ENCODE measurements at regions of chr10 and their contacts with region 1.

Region 1: GRCh38 chr10:62302760-62303159 is 34.1 kb upstream of the RTKN2 start:
- DNase-seq: no peak
- ATAC-seq: no peak
- H3K4me3 ChIP-seq: no peak overlapping the region
- H3K27ac ChIP-seq: no peak overlapping the region
- H3K4me1 ChIP-seq: no peaks in the 10 kb centered on the region
- H3K27me3 ChIP-seq: 0 out of 4 replicates have a peak, but pooled peaks cover 0 to 2% of the 10 kb centered on the region in 2 experiments
- CTCF ChIP-seq: no peak
- EP300 ChIP-seq: no peak
- POLR2A ChIP-seq: no peak
- RAD21 ChIP-seq: no peak

Region 2: DNA sequence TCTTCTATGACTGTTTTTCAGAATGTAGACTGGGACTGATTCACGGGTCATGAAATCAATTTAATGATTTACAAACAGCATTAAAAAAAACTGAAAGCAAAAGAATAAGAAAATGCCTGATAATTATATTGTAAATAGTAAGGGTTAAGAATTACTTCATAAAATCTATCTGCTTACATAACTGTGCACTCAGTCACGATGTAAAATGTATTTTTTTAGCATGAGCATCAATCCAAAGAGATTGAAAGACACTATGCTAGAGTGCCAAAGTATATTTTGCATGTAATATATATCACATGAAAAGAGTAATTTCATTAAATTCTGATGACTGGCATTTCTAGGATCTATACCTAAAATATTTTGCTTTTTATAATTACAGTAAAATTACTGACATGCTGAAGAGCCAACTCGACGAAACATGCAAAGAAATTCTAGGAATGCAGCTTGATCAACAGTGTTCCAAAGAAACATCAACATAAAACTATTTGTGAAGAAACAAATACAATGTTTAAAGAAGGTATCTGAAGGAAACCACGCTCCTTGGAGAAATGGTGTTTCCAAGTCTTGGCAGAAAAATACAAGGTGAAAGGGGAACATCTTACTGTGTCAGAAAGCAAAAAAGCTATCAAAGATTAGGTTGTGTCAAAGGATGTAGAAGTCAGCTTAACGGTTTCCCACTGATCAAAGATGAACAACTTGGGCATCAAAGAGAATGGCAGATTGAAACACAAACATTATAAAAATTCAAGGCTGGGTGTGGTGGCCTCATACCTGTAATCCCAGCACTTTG is 69.1 kb before region 1 on chr10:
- CTCF ChIA-PET with region 1: no interaction called
- POLR2A ChIA-PET with region 1: no interaction called
- RAD21 ChIA-PET with region 1: no interaction called
- SMC1A ChIA-PET with region 1: no interaction called
- in situ Hi-C with region 1: no loop called
- intact Hi-C with region 1: no loop called
- DNase-seq: no peak
- ATAC-seq: no peak
- H3K4me3 ChIP-seq: no peak overlapping the region
- H3K27ac ChIP-seq: no peak overlapping the region
- H3K4me1 ChIP-seq: no peaks in the 10 kb centered on the region
- H3K27me3 ChIP-seq: no peaks in the 10 kb centered on the region
- CTCF ChIP-seq: no peak
- EP300 ChIP-seq: no peak
- POLR2A ChIP-seq: no peak
- RAD21 ChIP-seq: no peak

Region 3: DNA sequence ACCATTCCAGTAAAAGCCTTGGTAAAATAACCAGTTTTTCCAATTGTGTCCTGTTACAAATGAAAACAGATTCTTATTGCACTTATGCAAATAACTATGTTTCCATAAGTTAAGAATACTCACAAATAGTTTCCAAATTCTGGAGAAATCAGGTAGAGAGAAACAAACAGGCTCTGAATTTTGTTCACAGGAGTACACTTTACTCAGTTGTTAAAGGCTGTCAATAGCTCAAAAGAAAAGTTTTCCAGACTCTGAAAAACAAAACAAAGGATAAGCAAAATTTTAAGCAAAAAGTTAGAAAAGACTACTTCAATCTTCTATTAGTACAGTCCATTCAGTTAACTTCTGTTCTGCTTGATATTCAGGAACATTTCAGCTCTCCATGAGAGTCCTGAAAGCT is 38.7 kb after region 1 on chr10:
- CTCF ChIA-PET with region 1: no interaction called
- POLR2A ChIA-PET with region 1: no interaction called
- RAD21 ChIA-PET with region 1: no interaction called
- SMC1A ChIA-PET with region 1: no interaction called
- in situ Hi-C with region 1: no loop called
- intact Hi-C with region 1: loop called (anchors 5 kb)
- DNase-seq: no peak
- ATAC-seq: no peak
- H3K4me3 ChIP-seq: no peak overlapping the region
- H3K27ac ChIP-seq: no peak overlapping the region
- H3K4me1 ChIP-seq: no peaks in the 10 kb centered on the region
- H3K27me3 ChIP-seq: no peaks in the 10 kb centered on the region
- CTCF ChIP-seq: no peak
- EP300 ChIP-seq: no peak
- POLR2A ChIP-seq: no peak
- RAD21 ChIP-seq: no peak

Region 4: DNA sequence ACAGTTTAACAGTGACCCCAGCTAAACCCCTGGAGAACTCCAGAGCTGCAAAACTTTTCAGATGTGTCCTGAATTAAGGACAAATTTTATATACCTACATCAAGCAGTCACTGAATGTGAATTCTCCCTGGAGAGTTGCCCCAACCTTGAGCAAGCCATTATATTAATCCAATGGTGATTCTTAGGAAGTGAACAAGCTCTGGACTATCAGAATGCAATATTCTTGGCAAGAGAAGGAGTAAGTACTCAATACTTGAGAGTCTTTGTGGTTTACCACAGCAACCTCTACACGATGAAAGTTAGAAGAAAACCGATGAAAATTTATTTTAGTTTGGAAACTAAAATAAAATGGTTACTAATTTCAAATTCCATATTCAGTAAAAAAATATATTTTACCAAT is 52.2 kb after region 1 on chr10:
- CTCF ChIA-PET with region 1: no interaction called
- POLR2A ChIA-PET with region 1: no interaction called
- RAD21 ChIA-PET with region 1: no interaction called
- SMC1A ChIA-PET with region 1: no interaction called
- in situ Hi-C with region 1: no loop called
- intact Hi-C with region 1: no loop called
- DNase-seq: no peak
- ATAC-seq: no peak
- H3K4me3 ChIP-seq: no peak overlapping the region
- H3K27ac ChIP-seq: no peak overlapping the region
- H3K4me1 ChIP-seq: no peaks in the 10 kb centered on the region
- H3K27me3 ChIP-seq: no peaks in the 10 kb centered on the region
- CTCF ChIP-seq: no peak
- EP300 ChIP-seq: no peak
- POLR2A ChIP-seq: no peak
- RAD21 ChIP-seq: no peak

Measured in GM12878 (cell line).